Ascending aorta (tissue), 2 donors: ENCODE measurements at regions of chr16 and their contacts with region 1.

Region 1: DNA sequence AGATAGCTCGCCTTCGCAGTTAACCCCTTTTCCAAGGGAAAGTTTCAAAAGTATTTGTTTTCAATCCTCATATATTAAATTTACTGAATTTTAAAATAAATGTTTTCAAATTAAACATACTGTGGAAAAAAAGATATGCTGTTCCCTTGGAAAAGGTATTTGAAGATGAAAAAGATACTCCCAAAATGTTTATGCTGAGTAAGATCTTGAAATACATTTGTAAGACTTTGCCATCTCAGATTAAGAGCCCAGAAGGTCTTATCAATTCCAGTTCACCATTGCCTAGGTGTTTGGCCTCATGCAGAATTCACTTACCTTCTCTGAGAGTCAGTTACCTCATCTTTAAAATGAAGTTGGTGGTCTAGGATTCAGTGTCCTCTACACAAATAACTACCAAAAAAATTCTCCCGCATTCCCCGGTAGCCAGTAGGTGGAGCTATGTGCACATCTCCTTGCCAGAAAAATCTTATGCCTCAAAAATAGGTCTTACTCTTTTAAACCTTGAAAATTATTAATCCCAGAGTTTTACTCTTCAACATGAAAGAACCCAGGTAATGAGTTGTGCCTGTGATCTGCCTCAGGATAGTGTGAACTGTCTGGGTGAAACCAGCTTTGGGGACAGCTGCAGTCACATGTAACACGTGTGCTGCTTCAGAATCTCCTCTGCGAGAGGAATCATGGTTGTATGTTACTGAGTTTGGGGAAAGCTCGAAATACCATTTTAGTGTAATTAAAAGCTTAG is 178.3 kb downstream of the MRTFB start:
- DNase-seq: no peak
- H3K4me3 ChIP-seq: no peak overlapping the region
- H3K27ac ChIP-seq: no peak overlapping the region
- H3K4me1 ChIP-seq: no peaks in the 10 kb centered on the region
- H3K27me3 ChIP-seq: no peaks in the 10 kb centered on the region
- CTCF ChIP-seq: peak; percentile 62 to 83 (median 78)

Region 2: DNA sequence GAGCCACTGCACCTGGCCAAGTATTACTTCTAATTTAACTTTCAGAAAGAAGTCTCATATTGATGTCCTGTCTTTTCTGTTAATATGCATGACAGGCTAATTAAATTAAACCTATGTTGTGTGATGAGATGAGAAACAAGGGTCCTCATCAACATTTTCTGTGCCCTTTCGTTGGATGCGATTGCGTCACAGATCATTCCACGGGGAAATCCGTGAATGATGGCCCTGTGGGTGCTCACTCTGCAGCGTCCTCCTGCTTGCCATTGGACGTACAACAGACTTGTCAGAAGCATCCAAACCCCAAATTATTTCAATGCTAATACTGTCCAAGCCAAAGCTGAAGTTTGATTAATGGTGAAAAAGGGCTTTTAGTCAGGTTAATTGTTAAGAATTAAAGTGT is 18.6 kb after region 1 on chr16:
- intact Hi-C with region 1: no loop called
- DNase-seq: no peak
- H3K4me3 ChIP-seq: no peak overlapping the region
- H3K27ac ChIP-seq: no peak overlapping the region
- H3K4me1 ChIP-seq: no peaks in the 10 kb centered on the region
- H3K27me3 ChIP-seq: no peaks in the 10 kb centered on the region
- CTCF ChIP-seq: no peak

Region 3: DNA sequence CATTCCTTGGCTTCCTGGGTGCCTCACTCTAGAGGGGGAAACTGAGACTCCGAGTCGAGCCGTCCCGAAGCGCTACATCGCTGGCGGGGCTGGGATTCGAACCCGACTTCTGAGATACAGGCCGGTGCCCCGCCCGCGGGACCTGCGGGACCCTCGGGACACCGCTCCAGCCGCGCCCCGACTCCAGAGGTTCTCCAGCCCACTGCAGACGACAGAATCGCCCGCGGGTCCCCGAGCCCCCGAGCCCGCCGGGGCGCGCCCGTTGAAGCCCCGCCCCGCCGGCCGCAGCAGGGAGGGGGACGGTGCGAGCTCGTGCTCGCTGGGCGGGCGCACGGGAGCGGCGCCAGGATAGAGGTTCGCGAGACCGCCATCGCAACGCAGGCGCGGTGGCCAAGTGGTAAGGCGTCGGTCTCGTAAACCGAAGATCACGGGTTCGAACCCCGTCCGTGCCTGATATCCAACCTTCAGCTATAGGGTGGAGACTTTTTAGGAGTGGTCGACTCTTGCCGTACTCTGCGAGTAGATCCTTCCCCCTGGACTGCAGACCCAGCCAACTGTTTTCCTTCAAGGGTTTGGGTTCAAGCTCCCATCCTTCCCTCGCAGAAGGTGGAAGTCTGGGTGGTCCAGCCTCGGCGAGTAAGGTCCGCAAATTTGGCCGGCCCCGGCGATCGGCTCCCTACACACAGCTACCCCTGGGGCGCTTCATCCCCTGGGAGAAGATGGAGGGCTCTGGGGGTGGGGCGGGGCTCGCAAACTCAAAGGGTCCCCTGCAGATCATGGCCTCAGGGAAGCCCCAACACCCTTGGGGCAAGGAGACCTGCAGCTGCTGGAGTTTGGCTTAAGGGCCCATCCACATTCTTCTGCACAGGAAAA is 36.3 kb after region 1 on chr16:
- intact Hi-C with region 1: loop called (anchors 5 kb)
- DNase-seq: peak; percentile 62 to 95
- H3K4me3 ChIP-seq: peak overlapping the region; percentile 80 to 88
- H3K27ac ChIP-seq: peak overlapping the region; percentile 65 to 95
- H3K4me1 ChIP-seq: peaks cover 3 to 6% of the 10 kb centered on the region in 2 donors
- H3K27me3 ChIP-seq: no peaks in the 10 kb centered on the region
- CTCF ChIP-seq: no peak

Region 4: DNA sequence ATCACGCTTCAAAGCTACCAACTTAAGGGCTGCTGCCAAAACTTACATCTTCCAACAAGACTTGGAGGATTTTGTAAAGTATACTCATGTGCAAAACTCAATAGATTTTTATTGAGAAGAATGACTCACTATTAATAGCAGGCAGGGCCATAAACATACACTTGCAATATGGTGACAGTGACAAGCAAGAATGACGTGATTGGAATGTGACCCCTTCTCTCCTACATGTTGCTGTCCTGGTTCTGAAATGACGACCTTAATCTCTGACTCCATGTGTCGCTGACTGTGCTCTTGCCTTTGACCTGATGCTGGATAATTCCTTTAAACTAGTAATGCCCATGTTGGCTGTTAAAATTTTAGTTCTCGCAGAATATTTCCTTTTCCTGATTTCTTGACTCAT is 206.1 kb after region 1 on chr16:
- intact Hi-C with region 1: no loop called
- DNase-seq: no peak
- H3K4me3 ChIP-seq: no peak overlapping the region
- H3K27ac ChIP-seq: no peak overlapping the region
- H3K4me1 ChIP-seq: no peaks in the 10 kb centered on the region
- H3K27me3 ChIP-seq: no peaks in the 10 kb centered on the region
- CTCF ChIP-seq: no peak

Region 5: DNA sequence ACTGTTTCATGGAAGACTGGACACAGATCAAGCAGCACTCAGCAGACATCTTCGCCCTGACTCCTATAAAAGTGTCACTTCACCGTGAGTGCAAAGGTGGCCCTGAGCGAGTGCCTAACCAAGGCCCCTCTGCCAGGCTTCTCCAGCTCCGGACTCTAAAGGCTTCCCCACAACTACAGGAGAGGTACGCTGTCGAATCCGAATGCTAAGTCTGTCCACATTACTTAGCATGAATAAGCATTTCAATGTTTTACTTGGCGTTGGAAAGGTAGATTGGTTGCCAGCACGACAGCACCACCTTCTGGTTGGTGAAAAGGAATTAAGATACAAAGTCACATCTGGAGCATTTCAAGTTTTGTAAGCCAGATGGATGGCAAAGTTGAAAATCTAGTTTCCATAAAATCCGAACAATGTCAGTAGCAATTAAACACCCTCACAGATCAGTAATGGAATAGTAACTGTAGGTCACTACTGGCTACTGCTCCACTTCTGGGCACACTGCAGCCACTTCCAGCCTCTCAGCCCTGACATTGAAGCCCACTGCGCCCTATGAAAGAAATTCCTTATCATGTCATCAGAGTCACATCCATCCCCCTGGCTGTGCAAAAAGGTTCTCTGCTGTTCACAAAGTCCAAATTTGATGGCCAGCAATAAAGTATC is 279.7 kb after region 1 on chr16:
- intact Hi-C with region 1: loop called (anchors 1 kb)
- DNase-seq: peak; percentile 16 to 85
- H3K4me3 ChIP-seq: peak overlapping the region in 1 of 2 donors; percentile 52
- H3K27ac ChIP-seq: peak overlapping the region in 1 of 2 donors; percentile 62
- H3K4me1 ChIP-seq: peaks cover 9 to 24% of the 10 kb centered on the region in 2 donors
- H3K27me3 ChIP-seq: no peaks in the 10 kb centered on the region
- CTCF ChIP-seq: peak; percentile 62 to 83 (median 74)

Region 6: GRCh38 chr16:14600164-14600563 is 350.7 kb after region 1 on chr16:
- intact Hi-C with region 1: loop called (anchors 5 kb)
- DNase-seq: no peak
- H3K4me3 ChIP-seq: no peak overlapping the region
- H3K27ac ChIP-seq: no peak overlapping the region
- H3K4me1 ChIP-seq: no peaks in the 10 kb centered on the region
- H3K27me3 ChIP-seq: no peaks in the 10 kb centered on the region
- CTCF ChIP-seq: peak in 2 of 3 experiments; percentile 10 to 37